Kidney (tissue), 22 donors: ENCODE measurements at regions of chr11 and their contacts with region 1.

Region 1: GRCh38 chr11:17504330-17505107 is 27.9 kb upstream of the ABCC8 start:
- DNase-seq: peak; percentile 77 to 91 (median 83)
- H3K4me3 ChIP-seq: no peak overlapping the region
- H3K27ac ChIP-seq: no peak overlapping the region
- H3K4me1 ChIP-seq: peaks cover 0 to 9% (median 0%) of the 10 kb centered on the region in 3 donors
- H3K27me3 ChIP-seq: no peaks in the 10 kb centered on the region
- CTCF ChIP-seq: peak; percentile 87

Region 2: GRCh38 chr11:17384002-17384511 is 120.5 kb before region 1 on chr11:
- intact Hi-C with region 1: loop called (anchors 5 kb)
- DNase-seq: peak; percentile 86 to 95 (median 91)
- H3K4me3 ChIP-seq: no peak overlapping the region
- H3K27ac ChIP-seq: no peak overlapping the region
- H3K4me1 ChIP-seq: peaks cover 0 to 6% (median 0%) of the 10 kb centered on the region in 3 donors
- H3K27me3 ChIP-seq: no peaks in the 10 kb centered on the region
- CTCF ChIP-seq: peak; percentile 97